ENCODE measurements at regions of chr14 and their contacts with region 1.

Region 1: GRCh38 chr14:61475316-61475715 is 153.9 kb downstream of the PRKCH start:
- DNase-seq: peak in 3 of 9 experiments; percentile 39 to 80 (median 69)
- ATAC-seq: no peak
- H3K4me3 ChIP-seq: no peak overlapping the region
- H3K4me3 Mint-ChIP-seq: no peak overlapping the region
- H3K27ac ChIP-seq: peak overlapping the region; percentile 72 to 98
- H3K27ac Mint-ChIP-seq: peak overlapping the region; percentile 97
- H3K4me1 ChIP-seq: peaks cover 95% of the 10 kb centered on the region
- H3K4me1 Mint-ChIP-seq: peaks cover 93% of the 10 kb centered on the region
- H3K27me3 ChIP-seq: no peaks in the 10 kb centered on the region
- H3K27me3 Mint-ChIP-seq: no peaks in the 10 kb centered on the region
- CTCF ChIP-seq: peak; percentile 45

Region 2: DNA sequence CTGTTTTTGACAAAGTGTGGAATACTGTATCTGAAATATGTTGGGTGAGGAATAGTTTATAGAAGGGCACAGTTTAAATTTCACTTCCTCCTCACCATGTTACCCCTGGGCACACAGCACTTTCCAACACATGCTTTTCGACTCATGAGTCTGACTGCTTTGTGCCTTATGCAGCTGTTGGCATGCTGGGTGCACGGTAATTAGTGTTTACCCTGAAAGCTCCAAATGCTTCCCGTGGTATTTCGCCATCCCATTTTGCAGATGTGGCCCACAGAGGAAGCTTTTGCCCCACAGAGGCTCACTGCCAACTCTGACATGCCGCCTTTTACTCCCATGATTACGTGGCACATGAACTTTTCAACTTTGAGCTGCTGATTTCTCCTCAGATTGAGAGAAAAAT is 14.6 kb after region 1 on chr14:
- CTCF ChIA-PET with region 1: interaction called, 6 read pairs
- POLR2A ChIA-PET with region 1: interaction called, 4 read pairs
- intact Hi-C with region 1: loop called in 1 of 2 experiments (anchors 1 kb)
- DNase-seq: no peak
- ATAC-seq: no peak
- H3K4me3 ChIP-seq: no peak overlapping the region
- H3K4me3 Mint-ChIP-seq: no peak overlapping the region
- H3K27ac ChIP-seq: peak overlapping the region in 1 of 2 experiments; percentile 42
- H3K27ac Mint-ChIP-seq: no peak overlapping the region
- H3K4me1 ChIP-seq: peaks cover 23% of the 10 kb centered on the region
- H3K4me1 Mint-ChIP-seq: peaks cover 42% of the 10 kb centered on the region
- H3K27me3 ChIP-seq: no peaks in the 10 kb centered on the region
- H3K27me3 Mint-ChIP-seq: no peaks in the 10 kb centered on the region
- CTCF ChIP-seq: no peak

Region 3: DNA sequence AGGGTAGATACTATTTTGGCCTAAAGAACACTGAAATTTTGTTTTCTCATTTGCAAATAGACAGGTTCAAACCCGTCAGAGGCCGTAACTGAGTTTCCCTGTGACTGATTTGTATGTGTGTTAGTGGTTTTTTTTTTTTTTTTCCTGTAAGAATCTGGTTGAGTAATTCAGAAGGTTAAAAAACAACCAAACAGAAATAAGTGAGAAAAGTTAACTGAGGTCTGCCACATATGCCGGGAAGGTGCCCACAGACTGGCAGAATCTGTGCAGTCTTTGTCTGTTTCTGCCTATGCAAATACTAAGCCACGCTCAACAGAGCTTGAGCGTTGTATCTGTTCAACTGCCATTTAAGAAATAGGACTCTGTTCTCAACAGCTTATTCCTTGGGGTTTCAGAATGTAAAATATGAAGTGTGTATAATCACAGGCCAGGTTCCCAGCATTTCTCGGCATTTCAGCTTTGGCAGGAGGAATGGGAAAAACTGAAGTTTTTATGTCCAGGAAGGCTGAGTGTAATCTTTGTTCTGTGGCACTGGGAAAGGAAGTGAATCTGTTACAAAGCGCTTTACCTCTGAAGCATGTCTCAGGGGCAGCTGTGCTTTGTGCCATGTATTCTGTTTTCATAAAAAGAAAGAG is 28.0 kb after region 1 on chr14:
- CTCF ChIA-PET with region 1: interaction called, 11 read pairs
- POLR2A ChIA-PET with region 1: interaction called, 14 read pairs
- intact Hi-C with region 1: loop called (anchors 1 kb)
- DNase-seq: peak; percentile 28 to 88 (median 64)
- ATAC-seq: peak; percentile 85
- H3K4me3 ChIP-seq: no peak overlapping the region
- H3K4me3 Mint-ChIP-seq: peak overlapping the region; percentile 71
- H3K27ac ChIP-seq: peak overlapping the region; percentile 28 to 61
- H3K27ac Mint-ChIP-seq: peak overlapping the region; percentile 98
- H3K4me1 ChIP-seq: peaks cover 97% of the 10 kb centered on the region
- H3K4me1 Mint-ChIP-seq: peaks cover 96% of the 10 kb centered on the region
- H3K27me3 ChIP-seq: no peaks in the 10 kb centered on the region
- H3K27me3 Mint-ChIP-seq: no peaks in the 10 kb centered on the region
- CTCF ChIP-seq: no peak

Region 4: GRCh38 chr14:61525293-61526011 is 50.1 kb after region 1 on chr14:
- CTCF ChIA-PET with region 1: no interaction called
- POLR2A ChIA-PET with region 1: no interaction called
- intact Hi-C with region 1: loop called in 1 of 2 experiments (anchors 2 kb)
- DNase-seq: peak in 6 of 9 experiments; percentile 41 to 74 (median 62)
- ATAC-seq: peak; percentile 59
- H3K4me3 ChIP-seq: no peak overlapping the region
- H3K4me3 Mint-ChIP-seq: peak overlapping the region; percentile 33
- H3K27ac ChIP-seq: peak overlapping the region; percentile 13 to 67
- H3K27ac Mint-ChIP-seq: peak overlapping the region; percentile 84
- H3K4me1 ChIP-seq: peaks cover 44% of the 10 kb centered on the region
- H3K4me1 Mint-ChIP-seq: peaks cover 78% of the 10 kb centered on the region
- H3K27me3 ChIP-seq: no peaks in the 10 kb centered on the region
- H3K27me3 Mint-ChIP-seq: no peaks in the 10 kb centered on the region
- CTCF ChIP-seq: no peak

Region 5: DNA sequence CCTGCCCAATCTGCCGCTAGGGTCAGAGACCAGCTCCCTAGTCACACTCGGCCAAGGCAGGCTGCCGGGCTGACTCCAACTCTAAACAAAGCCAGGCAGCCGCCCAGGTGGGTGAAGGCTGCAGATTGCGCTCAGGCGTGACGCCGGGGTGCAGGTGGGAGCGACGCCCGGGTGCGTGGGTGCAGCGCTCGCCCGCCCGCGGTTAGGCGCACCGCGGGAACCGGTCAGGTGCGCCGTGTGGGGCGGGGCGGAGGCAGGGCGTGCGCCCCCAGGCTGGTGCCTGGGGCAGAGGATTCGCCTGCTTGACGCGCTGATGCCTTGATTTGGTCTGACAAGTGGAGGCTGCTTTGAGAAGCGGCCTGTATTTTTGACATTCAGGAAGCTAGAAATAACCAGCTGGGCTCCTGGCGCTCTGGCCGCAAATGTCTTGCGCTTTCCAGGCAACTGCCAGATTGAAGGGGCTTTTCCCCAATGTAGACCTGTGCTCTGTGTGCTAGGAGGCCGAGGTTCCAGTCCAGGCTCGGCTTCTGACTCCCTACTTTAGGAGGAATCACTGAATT is 93.3 kb after region 1 on chr14:
- CTCF ChIA-PET with region 1: no interaction called
- POLR2A ChIA-PET with region 1: no interaction called
- intact Hi-C with region 1: no loop called
- DNase-seq: peak; percentile 22 to 77 (median 68)
- ATAC-seq: peak; percentile 73
- H3K4me3 ChIP-seq: peak overlapping the region; percentile 10 to 17
- H3K4me3 Mint-ChIP-seq: peak overlapping the region; percentile 71
- H3K27ac ChIP-seq: no peak overlapping the region
- H3K27ac Mint-ChIP-seq: peak overlapping the region; percentile 86
- H3K4me1 ChIP-seq: peaks cover 30% of the 10 kb centered on the region
- H3K4me1 Mint-ChIP-seq: peaks cover 45% of the 10 kb centered on the region
- H3K27me3 ChIP-seq: no peaks in the 10 kb centered on the region
- H3K27me3 Mint-ChIP-seq: no peaks in the 10 kb centered on the region
- CTCF ChIP-seq: no peak

Region 6: DNA sequence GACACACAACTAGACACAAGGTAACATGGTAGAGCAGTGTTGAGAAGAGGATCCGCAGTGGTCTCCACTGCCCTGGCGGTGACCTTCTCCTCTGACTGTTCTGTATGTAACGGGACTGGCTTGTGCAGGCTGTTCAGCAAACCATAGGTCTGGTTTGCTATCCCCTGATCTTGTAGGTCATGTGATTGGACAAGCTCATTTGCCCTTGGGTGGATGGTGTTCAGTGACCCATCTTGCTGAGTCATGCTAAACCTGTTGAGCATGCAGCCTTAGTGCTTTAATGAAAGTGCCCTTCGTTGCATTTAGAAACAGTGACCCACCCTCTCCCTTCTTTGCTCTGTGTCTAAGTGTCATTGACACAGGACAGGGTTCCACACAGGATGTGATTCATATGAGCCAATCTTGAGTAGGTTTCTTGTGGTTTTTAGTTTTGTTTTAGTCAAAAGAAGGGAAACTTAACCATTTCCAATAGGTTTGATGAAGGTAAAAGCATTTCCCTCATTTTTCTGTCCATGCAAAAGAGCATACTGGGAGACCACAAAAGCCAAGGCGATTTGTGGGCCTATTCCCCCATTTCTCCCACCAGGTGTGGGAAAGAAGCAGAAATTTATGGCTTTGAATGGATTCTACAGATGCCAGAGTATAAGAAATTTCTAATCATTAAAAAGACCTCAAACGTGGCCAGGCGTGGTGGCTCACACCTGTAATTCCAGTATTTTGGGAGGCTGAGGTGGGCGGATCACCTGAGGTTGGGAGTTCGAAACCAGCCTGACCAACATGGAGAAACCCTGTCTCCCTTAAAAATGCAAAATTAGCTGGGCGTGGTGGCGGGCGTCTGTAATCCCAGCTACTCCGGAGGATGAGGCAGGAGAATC is 187.4 kb after region 1 on chr14:
- CTCF ChIA-PET with region 1: interaction called, 3 read pairs
- POLR2A ChIA-PET with region 1: no interaction called
- intact Hi-C with region 1: loop called in 1 of 2 experiments (anchors 2 kb)
- DNase-seq: peak; percentile 14 to 89 (median 48)
- ATAC-seq: peak; percentile 86
- H3K4me3 ChIP-seq: peak overlapping the region; percentile 2 to 32
- H3K4me3 Mint-ChIP-seq: peak overlapping the region; percentile 76
- H3K27ac ChIP-seq: peak overlapping the region; percentile 10 to 74
- H3K27ac Mint-ChIP-seq: peak overlapping the region; percentile 93
- H3K4me1 ChIP-seq: peaks cover 55% of the 10 kb centered on the region
- H3K4me1 Mint-ChIP-seq: peaks cover 56% of the 10 kb centered on the region
- H3K27me3 ChIP-seq: no peaks in the 10 kb centered on the region
- H3K27me3 Mint-ChIP-seq: no peaks in the 10 kb centered on the region
- CTCF ChIP-seq: no peak

Region 7: GRCh38 chr14:61730756-61731373 is 255.5 kb after region 1 on chr14:
- CTCF ChIA-PET with region 1: interaction called, 25 read pairs
- POLR2A ChIA-PET with region 1: interaction called, 3 read pairs
- intact Hi-C with region 1: no loop called
- DNase-seq: peak in 3 of 9 experiments; percentile 19 to 58 (median 51)
- ATAC-seq: no peak
- H3K4me3 ChIP-seq: no peak overlapping the region
- H3K4me3 Mint-ChIP-seq: no peak overlapping the region
- H3K27ac ChIP-seq: no peak overlapping the region
- H3K27ac Mint-ChIP-seq: peak overlapping the region; percentile 42
- H3K4me1 ChIP-seq: peaks cover 3% of the 10 kb centered on the region
- H3K4me1 Mint-ChIP-seq: peaks cover 20% of the 10 kb centered on the region
- H3K27me3 ChIP-seq: no peaks in the 10 kb centered on the region
- H3K27me3 Mint-ChIP-seq: no peaks in the 10 kb centered on the region
- CTCF ChIP-seq: peak; percentile 73

Region 8: DNA sequence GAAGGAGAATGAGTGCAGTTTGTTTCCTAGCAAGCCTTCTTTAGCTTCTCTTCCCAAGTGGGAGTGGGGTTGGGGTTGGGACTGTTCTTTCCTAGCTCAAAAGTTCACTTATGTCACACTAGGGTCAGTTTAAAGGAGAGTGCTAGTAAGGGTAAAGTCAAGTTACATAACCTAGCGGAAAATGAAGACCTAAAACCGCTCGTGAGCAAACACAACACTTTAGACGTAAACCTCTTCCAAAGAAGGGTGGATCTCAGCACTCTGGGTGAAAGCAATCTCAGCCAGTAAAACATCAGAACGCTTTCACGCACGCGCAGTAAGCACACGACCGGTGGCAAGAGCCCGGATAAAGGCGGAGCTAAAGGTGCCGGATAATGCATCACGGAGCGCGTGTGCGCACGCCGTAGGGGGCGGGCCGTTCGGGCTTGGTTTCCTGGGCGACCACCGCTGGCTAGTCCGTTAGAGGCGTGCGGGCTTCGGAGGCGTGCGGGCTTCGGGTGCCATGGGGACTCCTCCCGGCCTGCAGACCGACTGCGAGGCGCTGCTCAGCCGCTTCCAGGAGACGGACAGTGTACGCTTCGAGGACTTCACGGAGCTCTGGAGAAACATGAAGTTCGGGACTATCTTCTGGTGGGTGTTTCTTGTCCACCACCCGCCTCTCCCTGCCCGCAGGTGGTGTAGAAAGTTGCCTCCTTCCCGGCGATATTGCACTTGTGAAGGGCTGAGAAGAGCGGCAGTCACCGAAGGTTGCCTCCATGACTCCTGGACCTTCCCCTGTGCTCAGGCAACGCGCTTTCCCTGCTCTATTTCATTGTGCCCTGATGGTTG is 286.9 kb after region 1 on chr14 and contains the start of gene SNAPC1:
- CTCF ChIA-PET with region 1: interaction called, 6 read pairs
- POLR2A ChIA-PET with region 1: interaction called, 3 read pairs
- intact Hi-C with region 1: loop called in 1 of 2 experiments (anchors 1 kb)
- DNase-seq: peak; percentile 96 to 100 (median 98)
- ATAC-seq: peak; percentile 91
- H3K4me3 ChIP-seq: peak within 1 kb of the TSS; percentile 87 to 90
- H3K4me3 Mint-ChIP-seq: peak within 1 kb of the TSS; percentile 98
- H3K27ac ChIP-seq: peak within 1 kb of the TSS; percentile 84 to 95
- H3K27ac Mint-ChIP-seq: peak within 1 kb of the TSS; percentile 100
- H3K4me1 ChIP-seq: peaks cover 31% of the 10 kb centered on the region
- H3K4me1 Mint-ChIP-seq: peaks cover 48% of the 10 kb centered on the region
- H3K27me3 ChIP-seq: no peaks in the 10 kb centered on the region
- H3K27me3 Mint-ChIP-seq: no peaks in the 10 kb centered on the region
- CTCF ChIP-seq: no peak
- total RNA-seq, gene SNAPC1: 6.8 to 7.4 TPM